CD8-positive, alpha-beta memory T cell (primary cell): ENCODE measurements at regions of chr10 and their contacts with region 1.

Region 1: DNA sequence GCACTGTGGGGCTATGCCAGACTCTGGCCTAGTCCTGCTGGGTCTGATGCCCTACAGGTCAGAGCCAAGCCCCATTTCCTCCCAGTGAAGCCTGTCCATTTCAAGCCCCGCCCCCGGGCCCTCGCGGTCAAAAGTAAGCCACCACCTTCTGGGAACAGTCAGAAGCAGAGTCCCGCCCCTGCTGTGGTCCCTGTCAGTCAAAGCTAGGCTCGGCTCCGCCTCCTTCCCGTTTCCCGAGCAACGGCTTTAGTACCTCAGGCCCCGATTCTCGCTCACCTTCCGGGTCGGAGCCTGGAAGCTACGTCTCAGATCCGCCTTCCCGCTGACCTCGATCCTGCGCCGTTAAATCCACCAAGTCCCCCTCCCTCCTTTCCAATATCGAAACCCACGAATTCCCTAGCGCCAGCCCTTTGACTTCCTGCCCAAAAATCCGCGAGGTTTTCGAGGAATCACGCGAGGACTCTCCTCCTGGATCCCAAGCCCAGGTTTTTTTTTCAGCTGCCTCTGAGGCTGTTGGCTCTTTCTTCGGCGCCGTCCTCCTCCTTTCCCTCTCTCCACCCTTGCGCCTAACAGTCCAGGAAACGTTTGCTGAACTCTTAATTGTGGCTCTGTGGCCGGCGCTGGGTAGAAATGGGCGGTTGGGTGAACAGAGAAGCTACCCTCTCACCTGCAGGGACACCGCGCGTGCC is 11.8 kb downstream of the SFXN3 start:
- DNase-seq: peak; percentile 65 to 87 (median 67)
- H3K4me3 ChIP-seq: peak overlapping the region; percentile 67
- H3K4me3 Mint-ChIP-seq: peak overlapping the region; percentile 92 to 99 (median 97)
- H3K27ac ChIP-seq: peak overlapping the region; percentile 66
- H3K27ac Mint-ChIP-seq: peak overlapping the region; percentile 74 to 100 (median 96)
- H3K4me1 ChIP-seq: peaks cover 17% of the 10 kb centered on the region
- H3K4me1 Mint-ChIP-seq: peaks cover 20 to 27% (median 21%) of the 10 kb centered on the region in 3 donors
- H3K27me3 ChIP-seq: no peaks in the 10 kb centered on the region
- H3K27me3 Mint-ChIP-seq: peaks cover 8 to 18% of the 10 kb centered on the region in 2 donors

Region 2: DNA sequence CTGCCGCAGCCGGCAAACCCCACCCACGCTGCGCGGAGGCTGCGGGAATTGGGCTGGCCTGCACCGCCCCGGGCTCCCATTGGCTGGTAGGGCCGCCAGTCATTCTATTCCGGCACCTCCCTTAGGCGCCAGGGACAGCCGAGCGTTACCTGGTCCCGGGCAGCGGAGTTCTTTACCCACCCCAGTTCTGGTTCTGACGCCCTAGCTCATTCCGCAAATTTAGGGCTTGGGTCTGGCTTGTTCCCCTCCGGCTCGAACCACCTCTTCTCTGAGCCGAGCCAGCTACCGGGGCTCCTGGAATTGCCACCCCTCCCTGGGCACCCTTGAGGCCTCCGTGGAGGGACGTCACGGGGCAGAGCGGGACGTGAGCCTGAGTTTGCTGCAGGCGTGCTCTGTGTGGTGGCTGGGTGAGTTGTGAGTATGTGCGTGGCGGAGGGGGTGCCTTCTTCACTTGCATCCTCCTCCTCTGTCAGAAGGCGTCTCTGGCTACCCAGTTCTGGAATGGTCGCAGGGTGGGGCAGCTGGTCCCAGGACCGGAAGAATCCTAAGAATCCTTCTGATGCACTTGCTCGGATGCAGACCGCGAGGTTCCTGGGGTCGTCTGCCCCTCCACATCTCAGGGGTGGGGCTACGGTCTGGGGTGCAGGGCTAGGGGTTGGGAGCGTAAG is 11.5 kb before region 1 on chr10 and contains the starts of genes PDZD7 and SFXN3:
- CTCF ChIA-PET with region 1: interaction called, 54 read pairs
- POLR2A ChIA-PET with region 1: interaction called, 9 read pairs
- DNase-seq: peak; percentile 94 to 97 (median 95)
- H3K4me3 ChIP-seq: peak within 1 kb of the TSS; percentile 85
- H3K4me3 Mint-ChIP-seq: peak within 1 kb of the TSS; percentile 92 to 98 (median 93)
- H3K27ac ChIP-seq: peak within 1 kb of the TSS; percentile 94
- H3K27ac Mint-ChIP-seq: peak within 1 kb of the TSS; percentile 94 to 100 (median 98)
- H3K4me1 ChIP-seq: peaks cover 15% of the 10 kb centered on the region
- H3K4me1 Mint-ChIP-seq: peaks cover 18 to 25% (median 22%) of the 10 kb centered on the region in 3 donors
- H3K27me3 ChIP-seq: no peaks in the 10 kb centered on the region
- H3K27me3 Mint-ChIP-seq: peaks cover 3 to 5% of the 10 kb centered on the region in 2 donors
- total RNA-seq, gene PDZD7: 0.31 to 0.33 TPM
- total RNA-seq, gene SFXN3: 25.2 to 26.5 TPM

Region 3: DNA sequence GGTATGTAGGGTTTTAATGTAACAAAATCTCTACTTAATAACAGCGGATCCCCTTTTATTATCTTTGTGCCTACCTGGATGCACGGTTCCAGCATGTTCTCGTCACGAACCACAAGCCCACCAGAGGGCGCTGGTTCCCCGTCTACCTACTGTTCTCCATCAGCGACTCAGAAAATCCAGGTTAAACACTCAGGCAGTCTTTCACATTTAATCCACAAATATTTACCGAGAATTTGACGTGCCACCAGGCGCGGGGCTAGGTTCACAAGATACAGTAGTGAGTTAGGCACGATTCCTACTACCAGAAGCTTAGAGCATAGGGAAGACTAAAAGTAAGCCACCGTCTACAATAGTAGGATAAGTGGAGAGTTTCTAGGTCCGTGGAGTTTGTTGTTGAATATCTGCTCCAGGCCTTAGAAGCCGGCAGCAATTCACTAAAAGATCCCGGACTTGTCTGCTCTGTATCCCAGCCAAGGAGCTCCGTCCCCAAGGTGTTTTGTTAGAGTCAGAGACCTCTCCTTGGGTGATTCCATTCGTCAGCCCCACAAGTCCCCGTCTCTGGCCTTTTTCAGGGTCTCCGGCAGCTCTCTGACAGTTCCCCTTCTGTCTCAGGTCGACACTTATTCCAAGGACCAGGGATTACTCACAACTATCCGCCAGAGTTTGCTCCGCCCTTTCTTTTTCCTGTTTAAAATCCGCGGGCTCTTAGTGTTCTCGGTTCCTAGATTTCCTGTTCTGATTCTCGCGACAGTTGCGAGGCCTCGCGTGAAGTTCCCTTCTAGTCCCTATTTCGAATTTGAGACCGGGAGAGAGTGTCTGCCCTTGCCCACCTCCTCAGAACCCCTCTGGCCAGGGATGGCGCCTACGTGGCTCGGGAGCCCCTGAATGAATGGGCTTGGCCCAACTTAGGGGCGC is 17.5 kb after region 1 on chr10:
- CTCF ChIA-PET with region 1: interaction called, 258 read pairs
- POLR2A ChIA-PET with region 1: interaction called, 7 read pairs
- DNase-seq: peak; percentile 83 to 96 (median 92)
- H3K4me3 ChIP-seq: peak overlapping the region; percentile 95
- H3K4me3 Mint-ChIP-seq: peak overlapping the region; percentile 89 to 99 (median 96)
- H3K27ac ChIP-seq: peak overlapping the region; percentile 77
- H3K27ac Mint-ChIP-seq: peak overlapping the region; percentile 89 to 98 (median 94)
- H3K4me1 ChIP-seq: peaks cover 23% of the 10 kb centered on the region
- H3K4me1 Mint-ChIP-seq: peaks cover 20 to 34% (median 22%) of the 10 kb centered on the region in 3 donors
- H3K27me3 ChIP-seq: peaks cover 26% of the 10 kb centered on the region
- H3K27me3 Mint-ChIP-seq: peaks cover 18 to 24% of the 10 kb centered on the region in 2 donors

Region 4: DNA sequence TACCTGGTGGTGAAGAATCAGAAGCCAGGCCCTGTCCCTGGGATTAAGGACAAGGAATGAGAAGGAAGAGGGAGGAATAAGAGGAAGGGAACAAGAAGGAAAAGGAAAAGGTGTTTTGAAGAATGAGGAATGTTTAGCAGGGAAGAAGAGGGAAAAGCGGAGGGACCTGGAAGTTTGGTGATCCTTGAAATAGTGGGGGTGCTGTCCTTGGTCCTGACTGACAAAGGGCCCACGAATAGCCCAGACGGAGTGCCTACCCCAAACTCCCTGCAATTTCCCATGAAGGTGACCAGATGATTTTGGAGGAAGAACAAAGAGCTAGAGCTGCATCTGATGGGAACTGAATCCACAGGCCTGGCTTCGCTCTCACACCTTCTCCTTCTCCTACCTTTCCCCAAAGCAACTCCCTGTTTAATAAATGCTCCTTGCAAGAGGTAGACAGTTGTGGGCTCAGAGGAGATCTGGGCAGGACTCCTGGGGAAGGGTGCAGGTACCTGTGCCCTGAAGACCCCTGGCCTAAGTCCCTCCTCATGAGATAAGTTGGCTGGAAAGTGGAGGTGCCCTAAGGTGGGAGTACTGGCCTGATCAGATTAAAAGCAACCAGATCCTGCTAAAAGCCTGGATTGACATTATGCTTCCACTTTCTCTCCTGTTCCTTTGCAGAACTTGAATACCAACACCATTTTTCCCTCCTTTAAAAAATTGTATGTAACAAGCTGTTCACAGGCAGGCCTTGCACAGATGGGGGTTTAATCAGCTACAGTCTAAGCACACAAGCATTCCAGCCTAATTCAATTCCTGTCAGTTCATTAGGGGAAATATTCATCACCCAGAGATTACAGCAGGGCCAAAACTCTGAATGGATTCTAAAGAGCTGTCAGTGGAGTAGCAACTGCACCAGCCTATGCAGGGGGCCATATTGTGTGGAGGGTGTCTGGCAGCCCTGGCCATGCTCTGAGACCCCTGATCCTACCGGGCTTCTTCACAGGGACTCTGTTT is 38.4 kb after region 1 on chr10:
- CTCF ChIA-PET with region 1: no interaction called
- POLR2A ChIA-PET with region 1: no interaction called
- DNase-seq: no peak
- H3K4me3 ChIP-seq: no peak overlapping the region
- H3K4me3 Mint-ChIP-seq: no peak overlapping the region
- H3K27ac ChIP-seq: no peak overlapping the region
- H3K27ac Mint-ChIP-seq: peak overlapping the region in 1 of 8 donors; percentile 48
- H3K4me1 ChIP-seq: no peaks in the 10 kb centered on the region
- H3K4me1 Mint-ChIP-seq: no peaks in the 10 kb centered on the region
- H3K27me3 ChIP-seq: no peaks in the 10 kb centered on the region
- H3K27me3 Mint-ChIP-seq: peaks cover 24 to 73% of the 10 kb centered on the region in 2 donors

Region 5: GRCh38 chr10:101238732-101239105 is 195.9 kb after region 1 on chr10:
- CTCF ChIA-PET with region 1: no interaction called
- POLR2A ChIA-PET with region 1: no interaction called
- DNase-seq: no peak
- H3K4me3 ChIP-seq: no peak overlapping the region
- H3K4me3 Mint-ChIP-seq: no peak overlapping the region
- H3K27ac ChIP-seq: no peak overlapping the region
- H3K27ac Mint-ChIP-seq: no peak overlapping the region
- H3K4me1 ChIP-seq: peaks cover 23% of the 10 kb centered on the region
- H3K4me1 Mint-ChIP-seq: peaks cover 14 to 26% (median 15%) of the 10 kb centered on the region in 3 donors
- H3K27me3 ChIP-seq: peaks cover 64% of the 10 kb centered on the region
- H3K27me3 Mint-ChIP-seq: peaks cover 53 to 77% of the 10 kb centered on the region in 2 donors

Region 6: GRCh38 chr10:101425535-101425934 is 382.7 kb after region 1 on chr10:
- CTCF ChIA-PET with region 1: no interaction called
- POLR2A ChIA-PET with region 1: no interaction called
- DNase-seq: no peak
- H3K4me3 ChIP-seq: no peak overlapping the region
- H3K4me3 Mint-ChIP-seq: no peak overlapping the region
- H3K27ac ChIP-seq: no peak overlapping the region
- H3K27ac Mint-ChIP-seq: no peak overlapping the region
- H3K4me1 ChIP-seq: no peaks in the 10 kb centered on the region
- H3K4me1 Mint-ChIP-seq: peaks cover 4 to 37% (median 16%) of the 10 kb centered on the region in 3 donors
- H3K27me3 ChIP-seq: no peaks in the 10 kb centered on the region
- H3K27me3 Mint-ChIP-seq: no peaks in the 10 kb centered on the region